Calu3 (cell line): ENCODE measurements at regions of chr19 and their contacts with region 1.

Region 1: GRCh38 chr19:40348125-40348913 is at the starts of genes C19orf47 and PLD3:
- DNase-seq: peak; percentile 100
- H3K4me3 Mint-ChIP-seq: peak within 1 kb of the TSS; percentile 89
- H3K27ac Mint-ChIP-seq: peak within 1 kb of the TSS; percentile 85
- H3K4me1 Mint-ChIP-seq: no peaks in the 10 kb centered on the region
- H3K27me3 Mint-ChIP-seq: no peaks in the 10 kb centered on the region
- CTCF ChIP-seq: no peak
- total RNA-seq, gene C19orf47: 19.3 and 22.7 TPM in 2 replicates
- total RNA-seq, gene PLD3: 184 and 192 TPM in 2 replicates

Region 2: DNA sequence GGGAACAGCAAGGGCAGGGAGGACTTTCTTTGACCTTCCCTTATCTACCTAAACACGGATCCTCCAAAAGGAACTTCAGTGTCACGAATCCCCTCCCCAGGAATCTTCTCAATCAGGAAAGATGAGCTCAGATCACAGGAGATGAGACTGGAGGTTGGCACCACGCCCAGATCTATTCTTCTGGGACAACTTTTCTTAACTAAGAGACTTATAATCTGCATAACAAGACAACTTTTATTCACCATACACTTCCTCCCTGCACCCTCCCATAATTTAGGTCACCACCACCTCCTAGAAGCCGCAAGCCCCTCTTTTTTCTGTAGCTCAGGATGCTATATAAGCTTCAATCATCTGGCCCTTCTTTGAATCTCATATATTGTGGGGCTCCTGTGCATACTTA is 44.0 kb before region 1 on chr19:
- CTCF ChIA-PET with region 1: no interaction called
- intact Hi-C with region 1: no loop called
- DNase-seq: no peak
- H3K4me3 Mint-ChIP-seq: no peak overlapping the region
- H3K27ac Mint-ChIP-seq: no peak overlapping the region
- H3K4me1 Mint-ChIP-seq: no peaks in the 10 kb centered on the region
- H3K27me3 Mint-ChIP-seq: no peaks in the 10 kb centered on the region
- CTCF ChIP-seq: no peak

Region 3: GRCh38 chr19:40331069-40331468 is 17.2 kb before region 1 on chr19:
- CTCF ChIA-PET with region 1: interaction called, 10 read pairs
- intact Hi-C with region 1: no loop called
- DNase-seq: no peak
- H3K4me3 Mint-ChIP-seq: no peak overlapping the region
- H3K27ac Mint-ChIP-seq: no peak overlapping the region
- H3K4me1 Mint-ChIP-seq: no peaks in the 10 kb centered on the region
- H3K27me3 Mint-ChIP-seq: no peaks in the 10 kb centered on the region
- CTCF ChIP-seq: no peak